ENCODE measurements at regions of chr10 and their contacts with region 1.

Region 1: GRCh38 chr10:95618126-95618525 is 38.4 kb downstream of the ALDH18A1 start:
- DNase-seq: no peak
- ATAC-seq: no peak
- H3K4me3 ChIP-seq: no peak overlapping the region
- H3K27ac ChIP-seq: no peak overlapping the region
- H3K4me1 ChIP-seq: no peaks in the 10 kb centered on the region
- H3K27me3 ChIP-seq: no peaks in the 10 kb centered on the region
- CTCF ChIP-seq: no peak
- POLR2A ChIP-seq: no peak

Region 2: DNA sequence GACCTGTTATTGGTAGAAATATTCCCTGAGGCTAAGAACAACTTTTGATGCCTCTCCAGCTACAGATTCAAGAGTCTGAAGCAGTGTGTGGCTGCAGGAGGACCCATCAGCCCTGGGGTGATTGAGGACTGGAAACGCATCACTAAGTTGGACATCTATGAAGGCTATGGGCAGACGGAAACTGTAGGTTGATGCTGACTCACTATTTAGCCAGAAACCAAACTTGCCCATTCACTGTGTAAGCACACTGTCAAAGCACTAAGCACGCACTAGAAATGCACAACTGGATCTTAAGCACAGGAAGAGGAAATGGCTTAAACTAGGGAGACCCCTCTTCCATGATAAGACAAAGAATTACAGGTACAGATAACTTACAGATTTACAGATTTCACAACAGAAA is 403.3 kb before region 1 on chr10:
- in situ Hi-C with region 1: loop called in 2 of 4 experiments (anchors 10 to 25 kb)
- intact Hi-C with region 1: no loop called
- DNase-seq: no peak
- ATAC-seq: no peak
- H3K4me3 ChIP-seq: no peak overlapping the region
- H3K27ac ChIP-seq: no peak overlapping the region
- H3K4me1 ChIP-seq: no peaks in the 10 kb centered on the region
- H3K27me3 ChIP-seq: no peaks in the 10 kb centered on the region
- CTCF ChIP-seq: no peak
- POLR2A ChIP-seq: no peak

Region 3: DNA sequence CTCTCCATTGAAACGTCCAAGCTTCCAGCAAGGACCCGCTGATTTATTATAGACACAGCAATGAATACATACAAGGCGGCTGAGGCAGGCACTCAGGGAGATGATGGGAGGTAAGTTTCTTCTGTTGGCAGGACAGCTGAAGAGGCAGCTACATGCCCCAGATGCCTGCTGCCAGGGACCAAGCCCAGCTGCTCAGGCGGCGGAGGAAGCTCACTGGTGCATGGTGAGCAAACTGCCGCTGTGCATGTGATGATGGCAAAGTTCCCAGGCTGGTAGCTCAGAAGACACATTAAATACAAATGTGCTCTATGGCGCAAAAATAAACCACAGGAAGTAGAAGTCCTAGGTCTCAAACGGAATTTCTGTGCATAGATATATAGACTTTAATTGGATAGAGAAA is 688.4 kb after region 1 on chr10:
- in situ Hi-C with region 1: no loop called
- intact Hi-C with region 1: no loop called
- DNase-seq: peak; percentile 41 to 57
- ATAC-seq: peak; percentile 46 to 50
- H3K4me3 ChIP-seq: no peak overlapping the region
- H3K27ac ChIP-seq: no peak overlapping the region
- H3K4me1 ChIP-seq: no peaks in the 10 kb centered on the region
- H3K27me3 ChIP-seq: peaks cover 0 to 2% (median 0%) of the 10 kb centered on the region in 3 donors
- CTCF ChIP-seq: no peak
- POLR2A ChIP-seq: no peak